Activated CD4-positive, alpha-beta T cell treated with anti-CD3 and anti-CD28 coated beads for 36 hours (primary cell): ENCODE measurements at regions of chr15 and their contacts with region 1.

Region 1: DNA sequence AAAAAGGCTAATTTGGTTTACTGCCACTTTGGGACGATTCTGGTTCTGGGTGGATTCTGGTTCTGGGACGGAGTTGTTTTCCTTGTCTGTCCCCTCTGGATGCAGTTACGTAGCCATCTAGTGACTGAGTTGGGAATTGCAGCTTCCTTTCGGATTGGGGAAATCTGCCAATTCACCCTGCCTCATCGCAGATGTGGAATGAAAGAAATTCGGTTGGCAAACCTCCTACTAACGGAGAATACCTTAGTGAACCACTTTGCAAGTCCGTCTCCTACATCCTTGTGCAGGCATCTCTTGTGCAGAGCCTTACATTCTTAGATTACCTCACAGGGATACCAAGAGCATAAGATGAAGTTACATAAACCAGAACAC is 31.5 kb upstream of the AP4E1 start:
- DNase-seq: peak; percentile 79
- ATAC-seq: no peak
- H3K4me3 Mint-ChIP-seq: peak overlapping the region; percentile 51
- H3K27ac Mint-ChIP-seq: peak overlapping the region; percentile 62
- H3K4me1 Mint-ChIP-seq: peaks cover 50% of the 10 kb centered on the region
- H3K27me3 Mint-ChIP-seq: peaks cover 12% of the 10 kb centered on the region

Region 2: DNA sequence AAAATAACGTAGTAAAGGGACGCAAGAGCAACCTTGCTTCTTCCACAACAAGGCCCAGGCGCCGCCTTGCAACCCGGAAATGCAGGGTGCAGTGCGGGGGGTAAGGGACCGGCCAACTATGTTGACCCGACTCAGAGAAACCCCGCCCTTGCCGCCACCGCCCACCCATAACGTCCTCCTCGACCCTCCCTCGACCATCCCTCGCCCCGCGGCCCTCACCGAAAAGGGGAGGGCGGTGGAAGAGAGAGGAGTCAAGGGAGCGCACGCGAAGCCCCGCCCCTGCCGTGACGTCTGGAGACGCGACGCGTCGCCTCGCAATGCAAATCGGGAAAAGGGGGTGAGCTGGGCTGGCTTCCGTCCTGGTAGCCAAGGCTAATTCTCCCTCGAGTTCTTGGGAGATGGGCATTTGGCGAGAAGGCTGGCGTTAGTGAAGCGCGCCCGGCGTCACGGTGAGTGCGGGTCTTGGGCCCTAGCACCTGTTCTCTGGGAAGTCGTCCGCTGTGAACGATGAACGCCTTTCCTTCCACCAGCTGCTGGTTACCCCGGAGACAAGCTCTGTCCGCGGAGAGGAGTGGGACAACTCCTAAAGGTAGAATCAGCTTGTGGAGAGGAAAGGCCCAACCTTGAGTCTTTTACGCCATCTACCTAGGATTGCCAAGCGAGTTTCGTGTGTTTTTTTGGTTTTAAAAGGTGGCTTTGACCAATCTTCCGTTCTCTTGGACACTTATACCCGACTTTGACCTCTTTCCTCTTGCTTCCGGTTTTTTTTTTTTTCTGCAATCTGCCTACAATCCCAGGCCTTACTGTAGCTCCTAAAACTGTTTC is 452.7 kb before region 1 on chr15 and contains the start of gene USP8:
- CTCF ChIA-PET with region 1: no interaction called
- POLR2A ChIA-PET with region 1: no interaction called
- intact Hi-C with region 1: loop called in 1 of 2 experiments (anchors 5 kb)
- DNase-seq: peak; percentile 97
- ATAC-seq: peak; percentile 98
- H3K4me3 Mint-ChIP-seq: peak within 1 kb of the TSS; percentile 88
- H3K27ac Mint-ChIP-seq: peak within 1 kb of the TSS; percentile 92
- H3K4me1 Mint-ChIP-seq: peaks cover 32% of the 10 kb centered on the region
- H3K27me3 Mint-ChIP-seq: no peaks in the 10 kb centered on the region
- total RNA-seq, gene USP8: 39.8 to 45.3 TPM

Region 3: GRCh38 chr15:50562735-50563640 is 314.0 kb before region 1 on chr15:
- CTCF ChIA-PET with region 1: no interaction called
- POLR2A ChIA-PET with region 1: no interaction called
- intact Hi-C with region 1: loop called in 1 of 2 experiments (anchors 10 kb)
- DNase-seq: peak; percentile 34
- ATAC-seq: peak; percentile 75
- H3K4me3 Mint-ChIP-seq: no peak overlapping the region
- H3K27ac Mint-ChIP-seq: peak overlapping the region; percentile 79
- H3K4me1 Mint-ChIP-seq: peaks cover 16% of the 10 kb centered on the region
- H3K27me3 Mint-ChIP-seq: no peaks in the 10 kb centered on the region

Region 4: GRCh38 chr15:50655555-50655954 is 221.4 kb before region 1 on chr15:
- CTCF ChIA-PET with region 1: no interaction called
- POLR2A ChIA-PET with region 1: no interaction called
- intact Hi-C with region 1: no loop called
- DNase-seq: no peak
- ATAC-seq: no peak
- H3K4me3 Mint-ChIP-seq: no peak overlapping the region
- H3K27ac Mint-ChIP-seq: no peak overlapping the region
- H3K4me1 Mint-ChIP-seq: peaks cover 18% of the 10 kb centered on the region
- H3K27me3 Mint-ChIP-seq: no peaks in the 10 kb centered on the region

Region 5: GRCh38 chr15:50686468-50687301 is 190.3 kb before region 1 on chr15 and contains the start of gene TRPM7:
- CTCF ChIA-PET with region 1: interaction called, 4 read pairs
- POLR2A ChIA-PET with region 1: interaction called, 3 read pairs
- intact Hi-C with region 1: loop called in 1 of 2 experiments (anchors 1 kb)
- DNase-seq: peak; percentile 95
- ATAC-seq: peak; percentile 79
- H3K4me3 Mint-ChIP-seq: peak within 1 kb of the TSS; percentile 99
- H3K27ac Mint-ChIP-seq: peak within 1 kb of the TSS; percentile 97
- H3K4me1 Mint-ChIP-seq: peaks cover 49% of the 10 kb centered on the region
- H3K27me3 Mint-ChIP-seq: no peaks in the 10 kb centered on the region
- total RNA-seq, gene TRPM7: 40.7 to 41.4 TPM

Region 6: GRCh38 chr15:51006336-51006985 is 129.5 kb after region 1 on chr15:
- CTCF ChIA-PET with region 1: no interaction called
- POLR2A ChIA-PET with region 1: no interaction called
- intact Hi-C with region 1: no loop called
- DNase-seq: no peak
- ATAC-seq: peak; percentile 63
- H3K4me3 Mint-ChIP-seq: no peak overlapping the region
- H3K27ac Mint-ChIP-seq: no peak overlapping the region
- H3K4me1 Mint-ChIP-seq: peaks cover 3% of the 10 kb centered on the region
- H3K27me3 Mint-ChIP-seq: no peaks in the 10 kb centered on the region